ENCODE measurements at regions of chr1 and their contacts with region 1.

Region 1: GRCh38 chr1:226062558-226063223 is at the start of gene H3-3A:
- DNase-seq: peak; percentile 99
- H3K4me3 ChIP-seq: peak within 1 kb of the TSS; percentile 81 to 88
- H3K27ac ChIP-seq: peak within 1 kb of the TSS; percentile 96 to 99
- H3K4me1 ChIP-seq: peaks cover 2 to 41% (median 30%) of the 10 kb centered on the region in 4 donors
- H3K27me3 ChIP-seq: no peaks in the 10 kb centered on the region
- CTCF ChIP-seq: peak in 1 of 2 experiments; percentile 13

Region 2: GRCh38 chr1:225851805-225852204 is 210.9 kb before region 1 on chr1:
- intact Hi-C with region 1: no loop called
- DNase-seq: no peak
- H3K4me3 ChIP-seq: no peak overlapping the region
- H3K27ac ChIP-seq: no peak overlapping the region
- H3K4me1 ChIP-seq: no peaks in the 10 kb centered on the region
- H3K27me3 ChIP-seq: no peaks in the 10 kb centered on the region
- CTCF ChIP-seq: no peak

Region 3: DNA sequence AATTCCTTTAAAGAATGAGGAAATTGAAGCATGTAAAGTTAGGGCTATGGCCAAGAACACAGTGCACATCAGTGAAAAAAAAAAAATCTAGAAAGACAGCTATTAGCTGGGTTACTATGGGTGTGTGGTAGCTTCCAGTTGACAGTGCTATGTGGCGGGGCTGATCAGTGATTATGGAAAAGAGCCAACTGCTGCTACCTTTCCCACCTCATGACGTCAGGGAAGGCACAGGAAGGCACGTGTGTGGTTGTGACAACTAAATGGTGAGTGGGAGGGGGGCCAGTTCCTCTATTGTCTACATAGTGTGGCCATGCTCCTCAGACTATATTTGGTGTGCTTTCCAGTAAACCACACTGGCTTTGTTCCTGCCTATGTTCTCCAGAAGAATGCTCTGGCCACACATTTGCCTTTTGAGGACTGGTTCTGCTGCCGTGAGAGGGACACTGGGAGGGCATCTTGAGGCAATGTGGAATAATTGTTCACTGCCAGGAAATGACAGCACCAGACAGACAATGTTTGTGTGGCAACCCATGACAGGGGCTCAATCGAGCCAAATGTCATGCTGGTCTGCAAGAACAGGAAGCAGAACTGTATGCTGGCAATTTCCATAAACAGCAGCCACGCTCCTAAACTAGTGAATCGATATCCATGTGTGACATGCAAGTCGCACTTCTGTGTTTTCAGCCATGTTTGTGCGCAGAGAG is 60.6 kb before region 1 on chr1:
- intact Hi-C with region 1: loop called (anchors 5 kb)
- DNase-seq: peak; percentile 78 to 82
- H3K4me3 ChIP-seq: no peak overlapping the region
- H3K27ac ChIP-seq: peak overlapping the region; percentile 20 to 35
- H3K4me1 ChIP-seq: peaks cover 0 to 26% (median 12%) of the 10 kb centered on the region in 4 donors
- H3K27me3 ChIP-seq: no peaks in the 10 kb centered on the region
- CTCF ChIP-seq: no peak

Region 4: GRCh38 chr1:226109829-226110248 is 47.1 kb after region 1 on chr1:
- intact Hi-C with region 1: loop called (anchors 2 kb)
- DNase-seq: peak; percentile 87 to 93
- H3K4me3 ChIP-seq: peak overlapping the region; percentile 66 to 98
- H3K27ac ChIP-seq: peak overlapping the region; percentile 97 to 99
- H3K4me1 ChIP-seq: peaks cover 0 to 30% (median 25%) of the 10 kb centered on the region in 4 donors
- H3K27me3 ChIP-seq: no peaks in the 10 kb centered on the region
- CTCF ChIP-seq: peak in 1 of 2 experiments; percentile 41

Region 5: DNA sequence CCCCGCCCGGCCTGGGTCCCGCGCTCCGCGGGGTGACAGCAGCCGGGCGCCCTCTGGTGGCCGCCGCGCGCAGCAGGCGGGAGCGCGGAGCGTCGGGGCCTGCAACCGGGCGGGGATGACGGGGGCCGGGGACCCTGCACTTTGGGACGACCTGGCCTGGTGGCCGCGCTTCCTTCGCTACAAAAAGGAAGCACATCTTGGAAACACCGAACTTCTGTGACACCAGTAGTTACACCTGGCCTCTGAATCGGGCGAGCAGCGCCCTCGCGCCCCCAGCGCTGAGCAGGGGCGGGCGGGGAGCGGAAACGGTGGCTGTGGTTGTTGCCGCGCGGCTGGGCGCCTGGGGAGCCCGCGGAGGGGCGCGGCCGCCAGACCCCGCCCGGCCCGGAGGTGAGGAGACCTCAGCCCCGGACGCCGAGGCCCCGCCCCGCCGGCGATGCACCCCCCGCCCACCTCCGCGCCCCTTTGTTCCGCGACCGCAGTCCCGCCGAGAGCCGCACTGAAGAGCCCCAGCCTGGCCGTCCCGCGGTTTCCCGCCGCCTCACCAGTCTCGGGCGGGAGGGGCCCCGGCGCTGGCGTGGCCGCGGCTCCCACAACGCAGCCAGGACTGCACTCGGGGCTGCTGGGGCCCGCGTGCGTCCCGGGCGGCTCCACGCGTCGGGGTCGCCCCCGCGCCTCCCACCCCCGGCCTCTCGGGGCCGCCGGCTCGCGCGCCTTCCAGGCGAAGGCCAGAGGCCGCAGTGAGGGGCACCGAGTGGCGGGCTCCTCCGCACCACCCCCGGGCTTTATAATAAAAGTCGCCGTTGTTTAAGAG is 59.1 kb after region 1 on chr1:
- intact Hi-C with region 1: loop called (anchors 2 kb)
- DNase-seq: peak; percentile 37 to 72
- H3K4me3 ChIP-seq: peak overlapping the region; percentile 59 to 62
- H3K27ac ChIP-seq: peak overlapping the region; percentile 44 to 52
- H3K4me1 ChIP-seq: peaks cover 0 to 25% (median 10%) of the 10 kb centered on the region in 4 donors
- H3K27me3 ChIP-seq: peaks cover 0 to 2% of the 10 kb centered on the region in 2 donors
- CTCF ChIP-seq: peak; percentile 70 to 93

Region 6: DNA sequence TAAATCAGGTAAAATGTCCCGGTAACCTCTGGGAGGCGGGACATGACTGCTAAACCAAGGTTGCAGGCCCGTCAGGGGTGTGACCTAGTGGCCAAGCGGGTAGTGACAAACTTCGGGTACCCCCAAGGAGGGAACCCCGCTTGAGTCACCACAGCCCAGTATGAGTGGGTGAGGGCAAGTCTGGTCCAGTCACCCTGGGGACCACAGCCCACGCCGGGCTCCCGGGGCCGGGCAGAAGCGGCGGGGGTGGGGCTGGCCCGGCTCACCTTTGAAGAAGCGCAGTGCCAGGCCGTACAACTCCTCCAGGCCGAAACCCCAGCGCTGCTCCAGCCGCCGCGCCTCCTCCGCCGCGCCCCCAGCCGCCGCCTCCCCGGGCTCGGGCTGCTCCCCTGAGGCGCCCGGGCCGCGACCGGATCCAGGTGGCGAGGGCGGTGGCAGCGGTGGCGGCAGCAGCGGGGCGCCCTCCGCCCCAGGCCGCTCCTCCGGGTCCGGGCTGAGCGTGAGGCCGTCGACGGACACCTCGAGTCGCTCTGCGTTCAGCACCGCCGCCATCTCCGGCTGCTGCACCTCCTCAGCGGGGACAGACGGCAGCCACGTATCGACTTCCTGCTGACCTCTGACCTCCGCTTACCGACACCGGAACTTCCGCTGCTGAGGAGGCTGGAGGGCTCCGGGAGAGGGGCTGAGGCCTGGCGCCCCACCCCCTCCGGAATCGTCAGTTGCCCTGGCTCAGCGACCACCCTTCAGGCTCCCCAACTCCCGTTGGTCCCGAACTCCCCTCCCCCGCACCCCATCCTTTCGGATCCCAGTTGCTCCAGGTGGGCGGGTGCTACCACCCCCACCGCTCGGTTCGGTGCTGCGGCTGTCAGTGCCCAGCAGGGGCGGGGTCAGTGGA is 123.7 kb after region 1 on chr1 and contains the start of gene ACBD3:
- intact Hi-C with region 1: loop called (anchors 10 kb)
- DNase-seq: peak; percentile 87 to 93
- H3K4me3 ChIP-seq: peak within 1 kb of the TSS; percentile 90 to 91
- H3K27ac ChIP-seq: peak within 1 kb of the TSS; percentile 93 to 95
- H3K4me1 ChIP-seq: peaks cover 0 to 49% (median 28%) of the 10 kb centered on the region in 4 donors
- H3K27me3 ChIP-seq: no peaks in the 10 kb centered on the region
- CTCF ChIP-seq: peak in 1 of 2 experiments; percentile 9